Activated naive CD4-positive, alpha-beta T cell treated with anti-CD3 and anti-CD28 coated beads for 36 hours (primary cell): ENCODE measurements at regions of chr13 and their contacts with region 1.

Region 1: DNA sequence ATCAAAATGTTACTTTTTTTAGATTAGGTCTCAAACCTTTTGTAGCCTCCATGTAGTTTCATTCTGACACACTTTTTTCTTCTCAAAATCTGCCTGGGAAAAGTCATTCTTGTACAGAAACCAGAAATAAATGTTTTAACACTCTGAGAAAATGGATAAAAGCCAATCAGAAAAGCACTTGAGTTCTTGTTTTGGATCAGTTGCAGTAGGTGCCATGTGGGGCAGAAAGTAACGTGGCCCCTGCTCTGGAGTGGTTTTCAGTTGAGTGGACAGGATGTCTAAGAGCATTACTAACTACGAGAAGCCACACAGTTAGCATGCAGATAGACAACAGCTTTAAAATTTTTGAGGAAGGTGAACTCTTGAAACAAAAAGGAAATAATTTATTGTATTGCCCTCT is 19.1 kb downstream of the GPR183 start:
- DNase-seq: peak; percentile 89
- H3K4me3 Mint-ChIP-seq: peak overlapping the region; percentile 37
- H3K27ac Mint-ChIP-seq: peak overlapping the region; percentile 89
- H3K4me1 Mint-ChIP-seq: peaks cover 80% of the 10 kb centered on the region
- H3K27me3 Mint-ChIP-seq: no peaks in the 10 kb centered on the region

Region 2: DNA sequence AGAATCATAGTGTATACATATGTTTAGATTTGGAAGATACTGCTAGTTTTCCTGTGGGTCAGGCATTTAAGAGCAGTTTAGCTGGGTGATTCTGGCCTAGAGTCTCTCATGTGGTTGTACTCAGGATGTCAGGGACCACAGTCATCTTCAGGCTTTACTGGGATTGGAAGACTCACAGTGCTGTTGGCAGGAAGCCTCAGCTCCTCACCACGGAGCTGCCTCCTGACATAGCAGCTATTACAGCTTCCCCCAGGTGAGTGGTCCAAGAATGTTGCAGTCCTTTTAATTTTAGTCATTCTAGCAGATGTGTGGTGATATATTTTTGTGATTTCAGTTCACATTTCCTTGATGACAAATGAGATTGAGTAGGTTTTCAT is 13.0 kb before region 1 on chr13:
- CTCF ChIA-PET with region 1: interaction called, 17 read pairs
- intact Hi-C with region 1: loop called (anchors 1 kb)
- DNase-seq: peak; percentile 76
- H3K4me3 Mint-ChIP-seq: no peak overlapping the region
- H3K27ac Mint-ChIP-seq: peak overlapping the region; percentile 54
- H3K4me1 Mint-ChIP-seq: peaks cover 93% of the 10 kb centered on the region
- H3K27me3 Mint-ChIP-seq: no peaks in the 10 kb centered on the region

Region 3: GRCh38 chr13:99314640-99315176 is 26.6 kb after region 1 on chr13:
- CTCF ChIA-PET with region 1: interaction called, 3 read pairs
- intact Hi-C with region 1: loop called (anchors 2 kb)
- DNase-seq: peak; percentile 92
- H3K4me3 Mint-ChIP-seq: peak overlapping the region; percentile 54
- H3K27ac Mint-ChIP-seq: peak overlapping the region; percentile 96
- H3K4me1 Mint-ChIP-seq: peaks cover 82% of the 10 kb centered on the region
- H3K27me3 Mint-ChIP-seq: no peaks in the 10 kb centered on the region

Region 4: DNA sequence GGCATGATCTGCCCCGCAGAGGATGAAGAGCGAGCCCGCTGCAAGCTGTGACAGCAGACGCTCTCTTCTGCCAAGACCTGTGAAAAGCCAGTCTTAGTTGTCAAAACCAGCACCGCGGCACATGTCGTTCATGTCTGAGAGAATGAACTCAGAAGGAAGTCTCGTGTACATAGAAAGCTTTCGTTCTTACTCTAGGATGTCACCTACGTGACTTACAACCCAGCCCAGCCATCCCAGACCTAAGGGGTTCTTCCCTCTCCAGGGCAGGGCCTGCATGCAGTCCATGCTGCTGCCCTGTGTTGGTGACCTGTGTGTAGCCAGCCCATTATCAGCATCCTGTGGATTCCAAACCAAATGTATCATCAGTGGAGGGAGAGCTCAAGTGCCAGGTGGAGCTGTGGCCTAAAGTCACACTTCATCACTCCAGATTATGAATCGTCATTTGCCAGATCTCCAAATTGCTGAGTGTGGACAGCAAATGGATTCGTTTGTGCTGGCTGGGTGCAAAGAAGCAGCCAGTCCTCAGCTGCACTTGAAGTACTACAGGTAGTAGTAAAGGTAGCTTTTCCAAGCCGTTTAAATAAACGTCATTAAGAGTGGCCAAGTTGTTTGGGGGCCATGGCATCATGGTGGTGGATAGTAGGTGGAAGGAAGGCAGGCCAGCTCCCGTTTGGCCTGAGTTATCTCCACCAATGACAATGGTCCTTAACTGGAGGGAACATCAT is 93.0 kb after region 1 on chr13:
- CTCF ChIA-PET with region 1: interaction called, 5 read pairs
- intact Hi-C with region 1: loop called (anchors 1 kb)
- DNase-seq: peak; percentile 91
- H3K4me3 Mint-ChIP-seq: no peak overlapping the region
- H3K27ac Mint-ChIP-seq: peak overlapping the region; percentile 79
- H3K4me1 Mint-ChIP-seq: peaks cover 84% of the 10 kb centered on the region
- H3K27me3 Mint-ChIP-seq: no peaks in the 10 kb centered on the region